Mammary epithelial cell (primary cell): ENCODE measurements at regions of chr18 and their contacts with region 1.

Region 1: GRCh38 chr18:60910534-60910933 is 422.7 kb upstream of the CDH20 start:
- DNase-seq: no peak
- H3K4me3 ChIP-seq: no peak overlapping the region
- H3K27ac ChIP-seq: no peak overlapping the region
- H3K4me1 ChIP-seq: no peaks in the 10 kb centered on the region
- H3K27me3 ChIP-seq: no peaks in the 10 kb centered on the region
- CTCF ChIP-seq: no peak

Region 2: GRCh38 chr18:59788791-59789106 is 1121.8 kb before region 1 on chr18:
- CTCF ChIA-PET with region 1: no interaction called
- dilution Hi-C with region 1: no loop called
- in situ Hi-C with region 1: no loop called
- intact Hi-C with region 1: no loop called
- DNase-seq: no peak
- H3K4me3 ChIP-seq: no peak overlapping the region
- H3K27ac ChIP-seq: no peak overlapping the region
- H3K4me1 ChIP-seq: peaks cover 14% of the 10 kb centered on the region
- H3K27me3 ChIP-seq: no peaks in the 10 kb centered on the region
- CTCF ChIP-seq: no peak

Region 3: DNA sequence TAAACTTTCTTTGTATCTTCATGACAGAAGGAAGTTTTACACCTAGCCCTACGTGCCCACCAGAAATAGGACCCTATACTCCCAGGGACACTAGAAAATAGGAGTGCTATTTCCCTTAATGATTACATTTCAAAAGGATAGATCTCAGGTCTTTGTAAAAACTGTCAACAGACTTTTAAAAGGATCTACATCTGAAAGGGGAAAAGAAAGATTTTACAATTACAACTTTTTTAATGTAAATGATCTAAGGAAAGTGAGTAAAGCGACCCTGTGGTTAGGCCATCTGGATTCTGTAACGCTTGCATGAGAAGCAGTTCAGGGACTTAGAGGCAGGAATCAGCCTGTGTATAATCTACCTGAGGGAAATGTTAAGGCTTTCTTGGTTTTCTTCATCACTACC is 106.1 kb before region 1 on chr18:
- CTCF ChIA-PET with region 1: no interaction called
- dilution Hi-C with region 1: no loop called
- in situ Hi-C with region 1: no loop called
- intact Hi-C with region 1: no loop called
- DNase-seq: no peak
- H3K4me3 ChIP-seq: no peak overlapping the region
- H3K27ac ChIP-seq: no peak overlapping the region
- H3K4me1 ChIP-seq: no peaks in the 10 kb centered on the region
- H3K27me3 ChIP-seq: no peaks in the 10 kb centered on the region
- CTCF ChIP-seq: no peak

Region 4: DNA sequence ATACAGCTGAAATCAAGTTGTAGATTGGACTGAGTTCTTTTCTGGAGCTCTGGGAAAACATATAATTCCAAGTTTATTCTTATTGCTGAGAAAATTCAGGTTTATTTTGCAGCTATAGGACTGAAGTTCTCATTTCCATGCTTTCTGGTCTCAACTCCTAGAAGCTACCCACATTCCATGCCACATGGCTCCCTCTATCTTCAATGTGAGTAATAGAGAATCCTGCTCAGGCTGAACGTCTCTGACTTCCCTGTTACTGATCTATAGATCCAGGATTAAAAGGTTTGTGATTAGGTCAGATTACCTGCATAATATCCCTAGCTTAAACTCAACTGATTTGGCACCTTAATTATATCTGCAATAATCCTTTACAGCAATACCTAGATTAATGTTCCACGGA is 84.2 kb before region 1 on chr18:
- CTCF ChIA-PET with region 1: no interaction called
- dilution Hi-C with region 1: no loop called
- in situ Hi-C with region 1: no loop called
- intact Hi-C with region 1: loop called (anchors 10 kb)
- DNase-seq: no peak
- H3K4me3 ChIP-seq: no peak overlapping the region
- H3K27ac ChIP-seq: no peak overlapping the region
- H3K4me1 ChIP-seq: no peaks in the 10 kb centered on the region
- H3K27me3 ChIP-seq: no peaks in the 10 kb centered on the region
- CTCF ChIP-seq: peak; percentile 13 to 45

Region 5: DNA sequence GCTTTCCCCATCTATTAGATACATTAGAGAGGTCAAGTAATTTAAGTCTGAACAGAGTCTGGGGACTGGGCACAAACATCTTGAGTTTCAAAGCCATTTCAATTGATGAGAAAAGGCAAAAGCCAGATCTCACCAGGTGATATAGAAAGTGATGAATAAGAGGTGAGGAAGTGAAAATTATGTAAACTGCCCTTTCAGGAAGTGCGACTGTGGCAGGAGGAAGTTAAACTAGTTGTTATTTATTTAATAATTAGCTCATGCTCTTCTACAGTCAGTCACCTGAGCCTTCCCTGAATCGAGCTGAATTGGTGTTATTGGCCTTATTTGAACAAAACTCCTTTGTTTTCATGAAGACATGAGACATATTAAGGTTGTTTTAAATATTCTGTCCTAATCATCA is 537.8 kb after region 1 on chr18:
- CTCF ChIA-PET with region 1: no interaction called
- dilution Hi-C with region 1: no loop called
- in situ Hi-C with region 1: no loop called
- intact Hi-C with region 1: no loop called
- DNase-seq: no peak
- H3K4me3 ChIP-seq: no peak overlapping the region
- H3K27ac ChIP-seq: no peak overlapping the region
- H3K4me1 ChIP-seq: no peaks in the 10 kb centered on the region
- H3K27me3 ChIP-seq: no peaks in the 10 kb centered on the region
- CTCF ChIP-seq: no peak